Posterior vena cava (tissue), 2 donors: ENCODE measurements at regions of chr17 and their contacts with region 1.

Region 1: GRCh38 chr17:4014148-4014927 is 50.1 kb upstream of the ATP2A3 start:
- DNase-seq: no peak

Region 2: GRCh38 chr17:4043862-4044261 is 29.5 kb after region 1 on chr17:
- intact Hi-C with region 1: no loop called
- DNase-seq: no peak

Region 3: DNA sequence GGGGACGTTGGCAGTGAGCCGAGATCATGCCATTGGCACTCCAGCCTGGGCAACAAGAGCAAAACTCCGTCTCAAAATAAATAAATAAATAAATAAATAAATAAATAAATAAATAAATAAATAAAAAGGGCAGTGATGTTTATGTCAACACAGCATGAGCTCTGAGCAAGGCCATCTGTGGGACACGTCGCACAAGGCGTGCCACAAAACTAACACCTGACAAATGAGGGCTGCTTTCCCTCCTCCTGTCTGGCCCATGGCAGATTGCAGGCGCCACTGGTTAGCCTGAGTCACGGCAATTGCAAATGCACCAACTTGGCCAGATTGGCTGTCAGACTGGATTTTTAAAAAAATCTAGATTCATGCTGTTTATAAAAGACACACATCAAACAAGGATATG is 393.5 kb after region 1 on chr17:
- intact Hi-C with region 1: loop called in 1 of 2 experiments (anchors 2 kb)
- DNase-seq: no peak